Stomach (tissue), 19 donors: ENCODE measurements at regions of chr12 and their contacts with region 1.

Region 1: GRCh38 chr12:56688129-56688845 is at the start of gene PTGES3:
- DNase-seq: peak; percentile 98 to 100
- H3K4me3 ChIP-seq: peak within 1 kb of the TSS; percentile 94 to 98 (median 96)
- H3K27ac ChIP-seq: peak within 1 kb of the TSS; percentile 98 to 100 (median 100)
- H3K4me1 ChIP-seq: peaks cover 18 to 45% (median 40%) of the 10 kb centered on the region in 4 donors
- H3K27me3 ChIP-seq: no peaks in the 10 kb centered on the region
- CTCF ChIP-seq: no peak
- EP300 ChIP-seq: no peak
- POLR2A ChIP-seq: peak in 2 of 4 donors; percentile 77 to 87
- total RNA-seq, gene PTGES3: 43.3 to 120 (median 78.8) TPM

Region 2: DNA sequence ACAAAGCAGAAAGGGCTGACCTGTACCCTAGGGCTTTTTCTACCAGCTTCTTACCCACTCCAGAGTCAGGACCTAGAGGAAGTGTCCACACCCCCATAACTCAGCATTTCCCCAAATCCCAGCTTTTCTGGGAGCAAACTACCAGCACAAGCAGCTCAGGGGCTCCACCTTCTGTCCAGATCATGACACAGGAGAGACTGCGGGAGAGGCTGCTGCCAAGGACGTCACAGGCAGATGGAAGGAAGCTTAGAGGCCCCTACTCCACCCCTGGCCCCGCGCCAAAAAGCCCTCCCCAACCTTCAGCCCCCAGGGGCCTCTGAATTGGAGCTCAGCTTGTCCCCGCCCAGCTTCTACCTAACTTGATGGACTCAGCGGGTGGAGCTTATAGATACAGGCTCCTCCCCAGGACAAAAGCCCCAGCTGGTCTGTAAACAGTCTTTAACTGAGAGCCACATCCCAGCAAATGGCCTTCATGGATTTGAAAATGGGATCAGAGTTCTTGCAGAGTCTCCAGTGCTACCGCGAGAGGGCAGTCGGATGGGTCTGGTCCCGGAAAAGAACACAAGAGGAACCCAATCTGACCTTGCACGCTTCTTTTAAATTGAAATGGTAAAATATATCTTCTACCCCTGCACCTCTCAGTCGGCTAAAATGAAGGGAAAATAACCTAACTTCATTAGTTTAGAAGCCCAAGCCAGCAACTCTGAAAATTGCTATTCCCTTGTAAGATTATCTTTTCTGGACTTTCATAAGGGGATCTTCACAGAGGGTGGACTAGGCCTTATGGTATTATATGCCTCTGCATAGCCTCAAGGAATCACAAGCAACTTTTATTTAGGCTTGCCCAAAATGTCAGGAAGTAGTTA is 51.4 kb before region 1 on chr12:
- intact Hi-C with region 1: loop called (anchors 10 kb)
- DNase-seq: peak; percentile 97 to 100
- H3K4me3 ChIP-seq: peak overlapping the region; percentile 80 to 95 (median 86)
- H3K27ac ChIP-seq: peak overlapping the region; percentile 89 to 96 (median 95)
- H3K4me1 ChIP-seq: peaks cover 36 to 86% (median 66%) of the 10 kb centered on the region in 4 donors
- H3K27me3 ChIP-seq: no peaks in the 10 kb centered on the region
- CTCF ChIP-seq: peak in 5 of 7 experiments; percentile 38 to 62 (median 55)
- EP300 ChIP-seq: no peak
- POLR2A ChIP-seq: no peak